Lower leg skin (tissue), 4 donors: ENCODE measurements at regions of chr3 and their contacts with region 1.

Region 1: DNA sequence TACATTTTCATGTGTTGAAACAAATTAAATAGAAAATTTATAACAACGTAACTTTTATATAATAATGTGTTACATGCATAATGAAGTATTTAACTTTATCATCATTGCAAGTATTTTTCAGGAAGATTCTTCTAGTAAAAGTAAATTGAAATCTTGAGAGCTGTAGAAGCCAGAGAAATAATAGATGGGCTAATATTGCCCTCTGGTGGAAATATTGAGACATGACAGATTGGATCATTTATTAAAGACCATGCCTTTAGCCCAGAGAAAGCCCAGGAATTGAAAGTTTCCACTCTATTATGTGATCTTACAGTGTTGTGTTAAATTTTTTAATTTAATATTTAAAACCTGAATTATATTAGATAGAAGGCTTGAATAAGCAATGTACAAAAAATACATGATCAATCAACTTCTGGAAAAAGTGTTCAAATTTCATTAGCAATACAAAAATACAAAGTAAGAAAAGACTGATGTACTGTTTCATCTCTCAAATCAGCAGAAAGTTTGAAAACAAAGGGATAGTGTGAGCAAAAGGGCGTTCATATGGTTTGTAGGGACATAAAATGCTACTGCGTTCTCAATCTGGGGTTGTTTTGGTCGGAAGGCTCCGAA is 52.7 kb upstream of the SPTSSB start:
- DNase-seq: no peak
- H3K4me3 ChIP-seq: no peak overlapping the region
- CTCF ChIP-seq: peak in 1 of 3 donors; percentile 40
- POLR2A ChIP-seq: no peak

Region 2: GRCh38 chr3:160841455-160841854 is 582.6 kb before region 1 on chr3:
- intact Hi-C with region 1: no loop called
- DNase-seq: no peak
- H3K4me3 ChIP-seq: no peak overlapping the region
- CTCF ChIP-seq: no peak
- POLR2A ChIP-seq: no peak

Region 3: DNA sequence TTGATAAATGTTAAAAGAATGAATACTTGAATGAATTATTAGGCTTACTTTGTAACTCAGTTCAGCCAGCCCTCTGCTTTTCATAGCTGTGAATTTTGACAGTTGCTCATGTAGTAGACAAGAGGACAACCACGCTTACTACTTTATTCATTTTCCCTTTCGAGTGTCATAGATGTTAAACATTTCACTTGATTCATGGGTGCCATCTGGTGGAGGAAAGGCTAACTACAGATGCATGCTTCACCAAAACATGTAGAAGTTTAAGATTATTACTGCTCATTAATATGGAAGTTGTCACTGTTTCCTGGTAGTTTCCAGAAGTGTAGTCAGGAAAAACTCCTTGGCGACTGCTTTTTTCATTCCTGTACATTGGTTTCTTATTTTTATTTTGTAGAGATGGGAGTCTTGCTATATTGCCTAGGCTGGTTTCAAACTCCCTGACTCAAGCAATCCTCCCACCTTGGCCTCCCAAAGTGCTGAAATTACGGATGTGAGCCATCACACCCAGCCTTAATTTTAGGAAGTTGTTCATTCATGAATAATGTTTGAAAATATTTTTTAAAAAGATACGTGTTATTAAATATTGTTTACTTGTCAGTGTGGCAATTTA is 482.0 kb before region 1 on chr3:
- intact Hi-C with region 1: loop called (anchors 10 kb)
- DNase-seq: peak; percentile 85 to 90
- H3K4me3 ChIP-seq: no peak overlapping the region
- CTCF ChIP-seq: peak in 1 of 3 donors; percentile 72
- POLR2A ChIP-seq: no peak

Region 4: DNA sequence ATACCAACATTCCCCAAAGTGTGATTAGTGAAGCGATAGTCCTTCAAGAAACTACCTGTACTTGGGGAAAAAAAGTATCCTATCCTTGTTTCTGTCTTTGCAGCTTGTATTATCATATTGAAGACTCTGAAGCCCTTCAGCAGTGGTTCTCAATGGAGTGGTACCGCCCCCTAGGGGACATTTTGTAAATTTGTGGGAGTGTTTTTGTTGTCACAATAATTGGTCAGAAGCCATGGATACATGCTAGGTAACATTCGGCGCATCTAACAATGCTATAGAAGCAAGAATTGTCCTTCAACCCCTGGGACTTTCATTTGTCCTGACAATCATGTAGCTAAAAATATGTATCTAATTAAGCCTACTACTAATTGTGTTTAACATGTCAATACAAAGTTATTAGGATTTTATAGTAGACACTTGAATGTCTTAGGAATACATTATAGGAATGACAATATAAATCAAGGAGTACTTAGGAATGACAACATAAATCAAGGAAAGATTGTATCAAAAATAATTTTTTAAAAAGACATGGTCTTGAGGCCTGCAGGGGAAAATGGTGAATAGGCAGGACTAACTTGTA is 149.2 kb before region 1 on chr3:
- intact Hi-C with region 1: loop called (anchors 5 kb)
- DNase-seq: no peak
- H3K4me3 ChIP-seq: no peak overlapping the region
- CTCF ChIP-seq: no peak
- POLR2A ChIP-seq: no peak

Region 5: GRCh38 chr3:161838021-161838420 is 414.0 kb after region 1 on chr3:
- intact Hi-C with region 1: no loop called
- DNase-seq: no peak
- H3K4me3 ChIP-seq: no peak overlapping the region
- CTCF ChIP-seq: no peak
- POLR2A ChIP-seq: no peak